Activated T-helper 2 cell treated with anti-CD3 and anti-CD28 coated beads, Interferon-gamma antibody, Interleukin-2, Interleukin-4, amounts not matched to agents 10 μg/mL and 5 μg/mL and 100 μg/mL, durations not matched to agents 14 hours and 24 hours and 36 hours (primary cell): ENCODE measurements at regions of chr1 and their contacts with region 1.

Region 1: DNA sequence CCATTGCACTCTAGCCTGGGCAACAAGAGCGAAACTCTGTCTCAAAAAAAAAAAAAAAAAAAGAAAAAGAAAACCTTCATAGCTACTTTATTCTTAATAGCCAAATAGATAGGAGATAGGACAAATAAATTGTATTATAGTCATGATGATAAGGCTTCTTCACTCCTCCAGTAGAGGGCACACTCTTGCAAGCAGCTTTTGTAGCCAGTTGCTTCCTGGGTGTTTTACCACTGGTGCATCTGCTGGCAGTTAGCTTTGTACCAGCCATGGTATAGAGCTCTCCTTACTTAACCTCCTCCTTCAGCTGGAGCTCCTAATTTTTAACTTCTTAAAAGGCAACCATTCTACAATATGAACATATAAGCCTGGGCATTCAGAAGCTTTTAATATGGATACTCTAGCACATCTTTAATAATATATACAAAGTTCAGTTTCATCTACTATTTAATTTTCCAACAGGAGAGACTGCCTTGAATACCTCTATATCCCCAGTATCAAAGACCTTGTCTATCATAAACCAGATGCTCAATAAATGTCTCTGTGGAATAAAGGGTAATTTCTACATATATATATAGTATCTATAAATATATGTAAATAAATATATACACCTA is 35.8 kb downstream of the EVI5 start:
- DNase-seq: no peak
- H3K4me3 Mint-ChIP-seq: no peak overlapping the region
- H3K27ac Mint-ChIP-seq: no peak overlapping the region
- H3K4me1 Mint-ChIP-seq: no peaks in the 10 kb centered on the region
- H3K27me3 Mint-ChIP-seq: peaks cover 11% of the 10 kb centered on the region

Region 2: GRCh38 chr1:92817986-92818764 is 69.0 kb after region 1 on chr1:
- intact Hi-C with region 1: loop called (anchors 1 kb)
- DNase-seq: no peak
- H3K4me3 Mint-ChIP-seq: no peak overlapping the region
- H3K27ac Mint-ChIP-seq: no peak overlapping the region
- H3K4me1 Mint-ChIP-seq: no peaks in the 10 kb centered on the region
- H3K27me3 Mint-ChIP-seq: peaks cover 40% of the 10 kb centered on the region